Activated T-helper 2 cell treated with anti-CD3 and anti-CD28 coated beads, Interferon-gamma antibody, Interleukin-2, Interleukin-4, amounts not matched to agents 10 μg/mL and 5 μg/mL and 100 μg/mL, durations not matched to agents 14 hours and 24 hours and 36 hours (primary cell): ENCODE measurements at regions of chr7 and their contacts with region 1.

Region 1: DNA sequence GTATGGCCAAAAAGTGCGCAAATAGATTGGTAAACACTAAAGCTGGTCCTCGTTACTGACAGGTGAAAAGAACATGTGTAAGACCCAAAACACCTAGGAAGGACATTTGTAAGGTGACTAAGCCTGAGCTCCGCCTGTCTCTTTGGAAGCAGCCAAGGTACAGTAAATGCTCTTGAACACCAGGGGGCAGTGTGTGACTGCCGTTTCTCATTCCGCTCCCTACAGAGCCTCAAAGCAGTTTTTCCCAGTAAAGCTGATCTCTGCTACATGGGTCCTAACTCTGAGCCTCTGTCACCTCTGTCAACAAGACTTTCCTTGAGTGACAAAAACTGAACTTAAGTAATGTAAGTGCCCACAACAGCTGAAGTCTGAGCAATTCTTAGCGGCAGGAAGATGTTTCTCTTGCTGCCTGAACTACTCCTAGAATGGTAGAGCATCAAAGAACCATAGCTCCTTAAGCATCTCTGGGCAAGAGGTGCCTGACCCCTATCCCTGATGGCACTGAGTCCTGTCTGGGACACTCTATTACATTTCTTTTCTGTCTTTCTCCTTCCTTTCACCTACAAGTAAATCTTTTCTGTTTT is 238.0 kb upstream of the INHBA start:
- DNase-seq: peak; percentile 39
- H3K4me3 Mint-ChIP-seq: no peak overlapping the region
- H3K27ac Mint-ChIP-seq: no peak overlapping the region
- H3K4me1 Mint-ChIP-seq: peaks cover 15% of the 10 kb centered on the region
- H3K27me3 Mint-ChIP-seq: peaks cover 22% of the 10 kb centered on the region

Region 2: GRCh38 chr7:41385996-41386395 is 554.9 kb before region 1 on chr7:
- intact Hi-C with region 1: no loop called
- DNase-seq: no peak
- H3K4me3 Mint-ChIP-seq: no peak overlapping the region
- H3K27ac Mint-ChIP-seq: no peak overlapping the region
- H3K4me1 Mint-ChIP-seq: no peaks in the 10 kb centered on the region
- H3K27me3 Mint-ChIP-seq: no peaks in the 10 kb centered on the region

Region 3: DNA sequence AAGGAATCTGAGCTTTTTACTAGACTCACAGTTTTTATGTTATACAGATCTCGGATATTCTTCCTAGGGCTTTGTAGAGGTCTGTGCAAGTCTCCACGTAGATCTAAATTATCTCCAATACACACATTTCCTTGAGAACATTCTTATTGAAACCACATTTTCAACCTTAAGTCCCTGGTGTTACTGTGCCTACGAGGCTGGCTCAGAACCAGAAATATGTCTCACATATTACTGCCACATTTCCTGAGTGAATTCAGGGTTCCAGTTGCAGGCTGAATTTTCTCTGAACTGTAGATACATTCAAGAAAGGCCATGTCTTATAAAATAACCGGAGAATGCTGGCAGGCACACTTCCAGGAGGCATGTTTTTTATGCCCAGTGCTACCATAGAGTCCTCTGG is 284.5 kb before region 1 on chr7:
- intact Hi-C with region 1: no loop called
- DNase-seq: no peak
- H3K4me3 Mint-ChIP-seq: no peak overlapping the region
- H3K27ac Mint-ChIP-seq: no peak overlapping the region
- H3K4me1 Mint-ChIP-seq: no peaks in the 10 kb centered on the region
- H3K27me3 Mint-ChIP-seq: no peaks in the 10 kb centered on the region

Region 4: GRCh38 chr7:41930538-41931262 is 10.2 kb before region 1 on chr7:
- intact Hi-C with region 1: no loop called
- DNase-seq: no peak
- H3K4me3 Mint-ChIP-seq: no peak overlapping the region
- H3K27ac Mint-ChIP-seq: no peak overlapping the region
- H3K4me1 Mint-ChIP-seq: peaks cover 6% of the 10 kb centered on the region
- H3K27me3 Mint-ChIP-seq: peaks cover 15% of the 10 kb centered on the region

Region 5: DNA sequence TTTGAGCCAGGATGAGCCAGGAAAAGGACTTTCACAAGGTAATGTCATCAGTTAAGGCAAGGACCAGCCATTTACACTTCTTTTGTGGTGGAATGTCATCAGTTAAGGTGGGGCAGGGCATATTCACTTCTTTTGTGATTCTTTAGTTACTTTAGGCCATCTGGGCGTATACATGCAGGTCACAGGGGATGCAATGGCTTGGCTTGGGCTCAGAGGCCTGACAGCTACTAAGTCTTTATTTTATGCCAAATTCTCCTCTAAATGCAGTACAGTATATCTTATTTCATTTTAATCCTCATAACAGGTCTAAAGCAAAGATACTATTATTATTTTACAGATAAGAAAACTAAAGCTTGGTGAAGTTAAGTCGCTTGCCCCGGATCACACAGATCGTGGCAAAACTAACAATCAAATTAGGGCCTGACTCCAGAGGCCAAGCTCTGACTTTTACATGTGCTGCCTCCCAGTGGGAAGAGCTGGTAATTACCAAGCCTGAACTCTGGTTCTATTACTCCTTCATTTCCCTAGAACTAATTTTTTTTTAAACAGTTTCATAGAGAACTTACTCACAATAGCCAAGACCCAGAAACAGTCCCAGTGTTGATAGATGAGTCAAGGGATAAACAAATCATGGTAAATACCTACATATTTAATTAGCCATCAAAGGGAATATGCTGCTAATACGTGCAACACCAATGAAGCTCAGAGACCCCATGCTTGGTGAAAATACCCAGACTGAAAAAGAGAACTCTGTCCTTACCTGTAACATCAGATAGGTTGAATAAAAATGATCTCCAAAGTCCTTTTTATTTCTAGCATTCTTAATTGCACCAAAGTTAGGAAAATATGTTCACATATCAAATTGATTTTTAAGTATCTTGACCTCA is 935.6 kb after region 1 on chr7:
- intact Hi-C with region 1: loop called (anchors 5 kb)
- DNase-seq: peak; percentile 30
- H3K4me3 Mint-ChIP-seq: no peak overlapping the region
- H3K27ac Mint-ChIP-seq: no peak overlapping the region
- H3K4me1 Mint-ChIP-seq: no peaks in the 10 kb centered on the region
- H3K27me3 Mint-ChIP-seq: peaks cover 6% of the 10 kb centered on the region

Region 6: GRCh38 chr7:43260980-43261878 is 1320.4 kb after region 1 on chr7:
- intact Hi-C with region 1: loop called (anchors 10 kb)
- DNase-seq: peak; percentile 53
- H3K4me3 Mint-ChIP-seq: no peak overlapping the region
- H3K27ac Mint-ChIP-seq: no peak overlapping the region
- H3K4me1 Mint-ChIP-seq: no peaks in the 10 kb centered on the region
- H3K27me3 Mint-ChIP-seq: peaks cover 16% of the 10 kb centered on the region